ENCODE measurements at regions of chr1 and their contacts with region 1.

Region 1: DNA sequence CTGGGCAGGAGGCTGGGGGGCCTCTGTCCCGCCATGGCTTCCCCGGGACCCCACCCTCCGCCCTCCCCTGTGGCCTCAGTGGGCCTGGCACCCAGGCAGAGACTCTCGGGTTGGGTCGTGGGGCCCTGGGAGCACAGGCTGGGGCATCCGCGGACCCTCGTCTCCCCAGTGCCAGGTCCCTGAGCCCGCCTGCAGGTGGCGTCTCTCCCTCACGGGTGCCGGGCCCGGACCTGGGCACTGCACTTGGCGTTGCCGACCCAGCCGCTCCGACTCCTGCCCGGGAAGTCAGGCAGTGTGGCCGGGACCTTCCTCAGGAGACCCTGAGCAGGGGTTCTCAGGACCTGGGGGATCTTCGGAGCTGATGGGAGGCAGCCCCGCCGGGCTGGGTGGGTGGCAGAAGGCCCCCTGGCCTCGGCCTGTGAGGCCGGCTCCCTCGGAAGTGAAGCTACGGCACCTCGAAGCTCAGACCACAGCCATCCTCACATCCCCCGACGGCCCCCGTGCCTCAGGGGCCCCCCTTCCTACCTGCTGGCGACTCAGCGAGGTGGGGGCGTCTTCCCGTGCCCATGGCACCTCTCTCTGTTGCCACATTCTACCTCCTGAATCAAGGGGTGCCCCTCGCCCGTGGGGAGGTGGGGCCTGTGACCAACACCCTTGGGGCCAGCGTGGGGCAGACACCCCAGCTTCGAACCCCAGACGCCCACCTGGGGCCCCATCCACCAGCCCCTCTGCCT is 6.4 kb upstream of the C1orf159 start:
- DNase-seq: peak; percentile 84 to 90
- ATAC-seq: peak; percentile 88 to 97 (median 94)
- H3K4me3 ChIP-seq: peak overlapping the region; percentile 6
- H3K4me3 Mint-ChIP-seq: peak overlapping the region; percentile 60
- H3K27ac ChIP-seq: no peak overlapping the region
- H3K27ac Mint-ChIP-seq: peak overlapping the region in 1 of 2 donors; percentile 79
- H3K4me1 ChIP-seq: peaks cover 17% of the 10 kb centered on the region
- H3K4me1 Mint-ChIP-seq: peaks cover 10 to 15% of the 10 kb centered on the region in 2 donors
- H3K27me3 ChIP-seq: peaks cover 2% of the 10 kb centered on the region
- H3K27me3 Mint-ChIP-seq: peaks cover 0 to 3% of the 10 kb centered on the region in 2 donors
- CTCF ChIP-seq: peak; percentile 87

Region 2: GRCh38 chr1:1004780-1005697 is 117.2 kb before region 1 on chr1:
- intact Hi-C with region 1: no loop called
- DNase-seq: no peak
- ATAC-seq: peak; percentile 2 to 8 (median 4)
- H3K4me3 ChIP-seq: no peak overlapping the region
- H3K4me3 Mint-ChIP-seq: peak overlapping the region; percentile 68
- H3K27ac ChIP-seq: no peak overlapping the region
- H3K27ac Mint-ChIP-seq: peak overlapping the region; percentile 43 to 78
- H3K4me1 ChIP-seq: peaks cover 49% of the 10 kb centered on the region
- H3K4me1 Mint-ChIP-seq: peaks cover 20 to 23% of the 10 kb centered on the region in 2 donors
- H3K27me3 ChIP-seq: peaks cover 25% of the 10 kb centered on the region
- H3K27me3 Mint-ChIP-seq: peaks cover 11 to 31% of the 10 kb centered on the region in 2 donors
- CTCF ChIP-seq: no peak

Region 3: DNA sequence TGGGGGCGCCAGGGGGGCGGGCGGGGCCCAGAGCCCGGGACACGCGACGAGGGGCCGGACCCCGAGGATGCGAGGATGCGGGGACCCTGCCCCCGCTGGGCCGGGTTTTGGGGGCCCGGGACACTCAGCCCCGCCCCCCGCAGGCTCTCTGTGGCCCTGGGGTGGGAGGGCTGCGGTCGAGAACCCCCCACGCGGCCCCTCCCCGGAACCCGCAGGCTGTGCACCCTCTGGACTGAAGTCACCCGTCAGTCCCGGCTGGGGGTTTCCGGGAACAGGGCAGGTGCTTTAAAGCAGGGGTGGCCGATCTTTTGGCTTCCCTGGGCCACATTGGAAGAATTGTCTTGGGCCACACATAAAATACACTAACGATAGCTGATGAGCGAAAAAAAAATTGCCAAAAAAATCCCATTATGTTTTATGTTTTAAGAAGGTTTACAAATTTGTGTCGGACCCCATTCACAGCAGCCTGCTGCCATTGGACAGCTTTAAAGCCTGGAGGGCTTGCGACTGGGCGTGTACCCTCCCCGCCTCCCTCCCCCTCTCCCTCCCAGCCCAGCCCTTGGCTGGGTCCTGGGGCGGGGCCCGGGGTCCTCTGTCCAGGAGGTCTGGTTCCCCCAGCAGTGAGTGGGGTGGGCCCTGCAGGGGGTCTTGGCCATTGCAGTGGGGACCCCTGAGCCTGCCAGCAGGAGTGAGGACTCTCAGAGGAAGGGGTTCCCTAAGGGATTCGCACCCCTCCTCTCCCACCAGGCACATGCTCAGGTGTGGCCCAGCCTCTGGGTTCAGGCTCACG is 15.2 kb after region 1 on chr1:
- intact Hi-C with region 1: no loop called
- DNase-seq: peak; percentile 72 to 86
- ATAC-seq: peak; percentile 88 to 97 (median 97)
- H3K4me3 ChIP-seq: no peak overlapping the region
- H3K4me3 Mint-ChIP-seq: peak overlapping the region; percentile 74
- H3K27ac ChIP-seq: peak overlapping the region; percentile 76
- H3K27ac Mint-ChIP-seq: peak overlapping the region; percentile 72 to 82
- H3K4me1 ChIP-seq: peaks cover 32% of the 10 kb centered on the region
- H3K4me1 Mint-ChIP-seq: peaks cover 0 to 10% of the 10 kb centered on the region in 2 donors
- H3K27me3 ChIP-seq: no peaks in the 10 kb centered on the region
- H3K27me3 Mint-ChIP-seq: no peaks in the 10 kb centered on the region
- CTCF ChIP-seq: no peak

Region 4: DNA sequence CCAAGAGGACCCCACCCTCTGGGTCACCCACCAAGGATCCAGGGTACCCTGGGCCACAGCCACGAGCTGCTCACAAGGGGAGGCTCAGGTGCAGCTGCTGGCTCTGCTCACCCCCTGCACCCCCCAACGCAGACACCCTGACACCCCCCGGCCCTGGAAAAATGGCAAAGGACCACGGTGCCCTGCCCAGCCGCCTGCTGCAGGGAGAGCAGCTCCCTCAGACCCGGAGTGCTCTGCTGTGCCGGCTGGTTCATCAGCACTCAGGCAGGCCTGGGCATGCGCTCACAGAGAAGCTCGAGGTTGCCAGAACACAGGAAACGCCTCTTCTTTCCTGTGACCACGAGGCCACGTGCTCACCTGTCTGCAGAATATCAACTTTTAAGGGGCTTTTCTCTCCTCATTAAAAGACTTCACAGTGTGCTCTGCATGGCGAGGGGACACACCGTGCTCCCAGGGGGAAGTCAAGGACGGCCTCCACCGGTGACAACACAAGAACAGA is 128.6 kb after region 1 on chr1:
- intact Hi-C with region 1: loop called (anchors 1 kb)
- DNase-seq: peak in 1 of 2 donors; percentile 90
- ATAC-seq: peak; percentile 73 to 79 (median 75)
- H3K4me3 ChIP-seq: no peak overlapping the region
- H3K4me3 Mint-ChIP-seq: no peak overlapping the region
- H3K27ac ChIP-seq: peak overlapping the region; percentile 26
- H3K27ac Mint-ChIP-seq: peak overlapping the region; percentile 69 to 82
- H3K4me1 ChIP-seq: peaks cover 19% of the 10 kb centered on the region
- H3K4me1 Mint-ChIP-seq: peaks cover 7 to 11% of the 10 kb centered on the region in 2 donors
- H3K27me3 ChIP-seq: peaks cover 6% of the 10 kb centered on the region
- H3K27me3 Mint-ChIP-seq: no peaks in the 10 kb centered on the region
- CTCF ChIP-seq: no peak